MCF 10A (cell line): ENCODE measurements at regions of chr10 and their contacts with region 1.

Region 1: GRCh38 chr10:70363971-70364771 is 18.3 kb downstream of the LRRC20 start:
- DNase-seq: peak; percentile 98
- H3K4me3 Mint-ChIP-seq: peak overlapping the region; percentile 49
- H3K27ac Mint-ChIP-seq: peak overlapping the region; percentile 92
- H3K4me1 Mint-ChIP-seq: peaks cover 6% of the 10 kb centered on the region
- H3K27me3 Mint-ChIP-seq: no peaks in the 10 kb centered on the region
- CTCF ChIP-seq: peak; percentile 89

Region 2: DNA sequence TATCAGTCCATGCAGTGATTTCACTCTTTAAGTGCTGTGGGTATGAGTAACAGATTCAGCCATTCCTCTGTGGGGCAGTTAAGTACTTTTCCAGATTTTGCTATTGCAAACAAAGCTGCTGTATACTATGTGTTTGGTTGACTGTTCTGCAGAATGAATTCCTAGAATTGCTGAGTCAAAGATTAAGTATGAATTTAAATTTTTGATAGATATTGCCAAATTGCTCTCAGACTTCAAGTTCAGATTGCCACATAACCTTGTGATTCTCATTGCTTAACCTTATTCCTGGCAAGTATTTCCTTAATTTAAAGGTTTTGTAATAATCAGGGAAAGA is 172.2 kb before region 1 on chr10:
- CTCF ChIA-PET with region 1: interaction called, 7 read pairs
- POLR2A ChIA-PET with region 1: interaction called, 16 read pairs
- intact Hi-C with region 1: no loop called
- DNase-seq: peak; percentile 86
- H3K4me3 Mint-ChIP-seq: peak overlapping the region; percentile 16
- H3K27ac Mint-ChIP-seq: peak overlapping the region; percentile 73
- H3K4me1 Mint-ChIP-seq: peaks cover 41% of the 10 kb centered on the region
- H3K27me3 Mint-ChIP-seq: no peaks in the 10 kb centered on the region
- CTCF ChIP-seq: no peak

Region 3: GRCh38 chr10:70233109-70233938 is 130.8 kb before region 1 on chr10 and contains the start of gene PPA1:
- CTCF ChIA-PET with region 1: interaction called, 232 read pairs
- POLR2A ChIA-PET with region 1: interaction called, 101 read pairs
- intact Hi-C with region 1: no loop called
- DNase-seq: peak; percentile 96
- H3K4me3 Mint-ChIP-seq: peak within 1 kb of the TSS; percentile 90
- H3K27ac Mint-ChIP-seq: peak within 1 kb of the TSS; percentile 97
- H3K4me1 Mint-ChIP-seq: peaks cover 32% of the 10 kb centered on the region
- H3K27me3 Mint-ChIP-seq: no peaks in the 10 kb centered on the region
- CTCF ChIP-seq: no peak
- total RNA-seq, gene PPA1: 221 and 293 TPM in 2 replicates

Region 4: DNA sequence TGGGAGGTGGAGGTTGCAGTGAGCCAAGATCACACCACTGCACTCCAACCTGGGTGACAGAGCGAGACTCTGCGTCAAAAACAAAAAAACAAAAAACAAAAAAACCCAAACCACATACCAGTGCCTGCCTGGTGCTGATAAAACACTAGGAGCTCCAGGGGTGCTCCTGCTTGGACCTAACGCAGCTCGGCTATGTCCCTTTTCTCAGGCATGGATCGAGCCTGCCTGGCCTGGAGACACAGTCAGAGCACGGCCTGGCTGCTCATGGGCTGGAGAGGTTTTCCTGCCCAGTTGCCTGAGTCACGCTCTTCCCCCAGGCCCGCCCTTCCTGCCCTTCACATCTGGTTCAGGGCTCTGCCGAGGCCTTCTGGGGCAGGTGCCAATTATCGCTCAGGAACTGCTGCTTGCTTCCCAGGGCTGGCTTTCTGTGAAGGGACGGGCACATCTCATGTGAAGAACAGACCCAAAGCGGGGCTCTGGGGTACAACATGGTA is 67.7 kb before region 1 on chr10:
- CTCF ChIA-PET with region 1: interaction called, 5 read pairs
- POLR2A ChIA-PET with region 1: interaction called, 10 read pairs
- intact Hi-C with region 1: no loop called
- DNase-seq: peak; percentile 94
- H3K4me3 Mint-ChIP-seq: no peak overlapping the region
- H3K27ac Mint-ChIP-seq: peak overlapping the region; percentile 80
- H3K4me1 Mint-ChIP-seq: peaks cover 17% of the 10 kb centered on the region
- H3K27me3 Mint-ChIP-seq: no peaks in the 10 kb centered on the region
- CTCF ChIP-seq: no peak

Region 5: GRCh38 chr10:70381471-70382421 is 17.6 kb after region 1 on chr10:
- CTCF ChIA-PET with region 1: interaction called, 33 read pairs
- POLR2A ChIA-PET with region 1: interaction called, 24 read pairs
- intact Hi-C with region 1: no loop called
- DNase-seq: no peak
- H3K4me3 Mint-ChIP-seq: peak overlapping the region; percentile 75
- H3K27ac Mint-ChIP-seq: no peak overlapping the region
- H3K4me1 Mint-ChIP-seq: peaks cover 20% of the 10 kb centered on the region
- H3K27me3 Mint-ChIP-seq: no peaks in the 10 kb centered on the region
- CTCF ChIP-seq: no peak

Region 6: DNA sequence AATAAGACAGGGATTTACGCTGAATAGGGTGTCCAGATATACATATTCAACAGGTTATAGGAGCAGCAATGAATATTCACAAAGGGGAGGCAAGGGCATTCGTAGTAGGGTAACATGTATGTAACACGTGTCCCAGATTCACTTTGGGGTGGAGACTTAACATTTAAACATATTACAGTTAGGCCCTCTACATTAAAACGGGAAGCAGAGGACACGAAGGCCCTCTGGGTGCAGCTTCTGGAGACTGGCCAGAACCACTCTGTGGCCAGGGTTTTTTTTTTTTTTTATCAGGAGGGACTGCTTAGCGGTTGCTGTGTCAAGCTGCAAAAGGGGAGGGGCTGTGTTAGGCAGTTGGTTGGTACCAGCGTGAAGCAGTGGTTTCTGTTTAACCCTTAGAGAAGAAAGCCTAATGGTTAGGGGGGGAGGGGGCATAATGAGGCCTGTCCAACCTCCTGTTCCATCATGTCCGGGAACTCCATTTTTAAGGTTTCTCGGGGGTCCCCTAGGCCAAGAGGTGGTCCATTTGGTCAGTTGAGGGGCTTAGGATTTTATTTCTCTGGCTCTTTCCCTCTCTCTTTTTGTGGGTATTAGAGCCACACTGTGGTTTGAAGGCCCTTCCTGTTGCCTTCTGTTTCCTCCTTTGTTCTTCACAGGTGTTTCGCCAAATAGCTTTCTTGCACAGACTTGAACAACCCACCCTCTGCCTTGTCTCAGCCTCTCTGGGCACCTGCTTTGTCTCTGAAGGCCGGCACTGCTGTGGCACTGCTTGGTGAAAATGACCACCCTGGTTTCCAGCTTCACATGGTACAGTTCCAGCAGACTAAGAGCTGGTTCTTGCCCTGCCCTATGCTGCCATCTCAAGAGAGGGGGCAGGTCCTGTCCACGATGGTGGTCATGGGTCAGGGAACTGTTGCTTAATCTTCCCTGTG is 212.0 kb after region 1 on chr10:
- CTCF ChIA-PET with region 1: no interaction called
- POLR2A ChIA-PET with region 1: no interaction called
- intact Hi-C with region 1: no loop called
- DNase-seq: peak; percentile 80
- H3K4me3 Mint-ChIP-seq: no peak overlapping the region
- H3K27ac Mint-ChIP-seq: no peak overlapping the region
- H3K4me1 Mint-ChIP-seq: peaks cover 36% of the 10 kb centered on the region
- H3K27me3 Mint-ChIP-seq: no peaks in the 10 kb centered on the region
- CTCF ChIP-seq: no peak